ENCODE measurements at regions of chr22 and their contacts with region 1.

Region 1: DNA sequence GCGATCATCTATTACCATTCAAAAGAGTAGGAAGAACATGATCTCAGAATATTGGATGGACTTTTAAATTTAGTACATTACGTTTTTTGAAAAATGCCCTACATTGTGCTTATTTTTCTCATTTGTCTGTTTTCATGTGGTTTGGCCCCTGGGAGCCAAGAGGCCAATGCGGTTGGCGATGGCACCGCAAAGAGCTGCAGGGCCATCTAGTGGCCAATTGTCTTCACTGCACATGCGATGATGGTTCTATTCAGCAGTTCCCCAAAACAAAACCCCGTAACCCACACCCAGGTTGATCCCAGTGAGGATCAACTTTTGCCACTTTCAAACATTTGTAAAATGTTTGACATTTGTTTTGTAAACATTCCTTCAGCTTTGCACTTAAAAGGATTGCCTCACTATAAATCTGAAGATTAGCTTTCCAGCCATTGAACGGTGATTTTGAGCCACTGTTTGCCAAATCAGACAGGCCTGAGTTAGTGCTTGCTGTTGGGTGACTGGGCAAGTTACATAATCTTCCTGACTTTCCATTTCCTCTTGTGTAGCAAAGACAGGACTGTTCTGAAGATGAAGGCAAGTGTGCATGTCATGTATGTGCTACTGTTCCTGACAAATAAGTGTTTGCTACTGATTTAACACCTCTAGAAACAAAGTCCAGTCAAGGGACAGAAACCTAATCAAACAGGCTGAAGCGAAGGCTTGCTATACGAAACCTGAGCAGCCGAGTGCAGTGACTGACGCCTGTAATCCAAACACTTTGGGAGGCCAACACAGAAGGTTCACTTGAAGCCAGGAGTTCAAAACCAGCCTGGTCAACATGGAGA is 29.2 kb upstream of the XBP1 start:
- DNase-seq: peak; percentile 84
- H3K4me3 Mint-ChIP-seq: no peak overlapping the region
- H3K27ac Mint-ChIP-seq: no peak overlapping the region
- H3K4me1 Mint-ChIP-seq: peaks cover 17% of the 10 kb centered on the region
- H3K27me3 Mint-ChIP-seq: no peaks in the 10 kb centered on the region

Region 2: DNA sequence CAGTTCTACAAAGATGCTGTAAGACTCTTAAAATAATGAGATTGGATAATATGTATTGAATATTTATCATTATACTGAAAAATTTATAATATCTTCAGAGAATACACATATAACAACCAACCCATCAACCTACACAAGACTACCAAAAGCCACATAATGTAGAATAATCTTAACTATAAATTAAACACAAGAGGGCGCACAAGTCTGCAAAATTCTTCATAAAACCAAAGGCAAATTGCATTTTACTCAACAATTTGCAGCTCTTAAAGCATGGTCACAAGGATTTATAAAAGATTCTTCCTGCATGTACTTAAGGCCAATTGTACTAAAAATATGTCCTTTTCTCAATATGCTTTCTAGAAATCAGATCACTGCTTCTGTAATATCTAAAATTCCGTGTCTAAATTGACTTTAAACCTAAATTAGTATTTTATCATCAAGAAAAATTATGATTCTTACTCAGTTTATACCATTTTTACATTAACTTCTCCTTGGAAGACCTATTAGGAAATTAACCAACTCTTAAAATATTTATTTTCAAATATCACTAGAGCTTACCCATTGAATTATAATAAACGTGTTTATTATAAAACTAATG is 228.9 kb before region 1 on chr22:
- CTCF ChIA-PET with region 1: interaction called, 120 read pairs
- POLR2A ChIA-PET with region 1: no interaction called
- intact Hi-C with region 1: loop called (anchors 1 kb)
- DNase-seq: no peak
- H3K4me3 Mint-ChIP-seq: no peak overlapping the region
- H3K27ac Mint-ChIP-seq: no peak overlapping the region
- H3K4me1 Mint-ChIP-seq: no peaks in the 10 kb centered on the region
- H3K27me3 Mint-ChIP-seq: peaks cover 10% of the 10 kb centered on the region

Region 3: GRCh38 chr22:28772633-28773460 is 56.7 kb before region 1 on chr22 and contains the start of gene CCDC117:
- CTCF ChIA-PET with region 1: interaction called, 6 read pairs
- POLR2A ChIA-PET with region 1: no interaction called
- intact Hi-C with region 1: loop called (anchors 1 kb)
- DNase-seq: peak; percentile 96
- H3K4me3 Mint-ChIP-seq: peak within 1 kb of the TSS; percentile 98
- H3K27ac Mint-ChIP-seq: peak within 1 kb of the TSS; percentile 97
- H3K4me1 Mint-ChIP-seq: peaks cover 24% of the 10 kb centered on the region
- H3K27me3 Mint-ChIP-seq: no peaks in the 10 kb centered on the region
- total RNA-seq, gene CCDC117: 27.7 to 31.6 TPM

Region 4: DNA sequence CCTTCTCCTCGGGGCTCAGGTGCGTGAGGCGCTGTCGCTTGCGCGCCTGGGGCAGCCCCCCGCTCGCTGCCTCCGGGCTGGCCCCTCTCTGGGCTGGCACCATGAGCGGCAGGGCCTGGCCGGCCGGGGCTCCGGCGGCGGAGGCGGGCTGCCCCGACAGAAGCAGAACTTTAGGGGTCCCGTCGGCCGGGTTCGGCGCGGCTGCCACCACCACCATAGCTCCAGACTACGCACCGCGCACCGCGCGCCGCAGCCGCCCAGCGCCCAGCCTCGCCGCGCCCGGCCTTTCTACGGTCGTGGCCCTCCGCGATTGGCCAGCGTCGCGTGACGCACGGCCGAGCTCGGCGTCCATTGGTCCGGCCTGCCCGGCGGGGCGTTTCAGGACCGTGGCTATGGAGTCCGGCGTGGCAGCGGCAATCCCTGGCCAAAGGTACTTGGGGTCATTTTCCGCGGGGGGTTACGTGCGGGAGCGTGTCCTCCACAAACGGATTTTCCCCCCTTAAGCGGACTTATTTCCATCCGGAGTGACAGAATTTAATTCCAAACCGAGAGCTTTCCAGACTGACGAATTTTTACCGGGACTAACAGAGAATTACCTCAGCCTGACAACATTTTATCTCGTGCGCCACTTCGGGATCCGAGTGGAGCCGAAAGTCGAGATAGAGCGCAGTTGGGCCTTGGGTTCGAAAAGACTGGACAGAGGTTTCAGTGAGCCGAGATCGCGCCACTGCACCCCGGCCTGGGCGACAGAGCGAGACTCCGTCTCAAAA is 29.1 kb before region 1 on chr22 and contains the start of gene XBP1:
- CTCF ChIA-PET with region 1: interaction called, 30 read pairs
- POLR2A ChIA-PET with region 1: interaction called, 8 read pairs
- intact Hi-C with region 1: no loop called
- DNase-seq: peak; percentile 92
- H3K4me3 Mint-ChIP-seq: peak within 1 kb of the TSS; percentile 94
- H3K27ac Mint-ChIP-seq: peak within 1 kb of the TSS; percentile 96
- H3K4me1 Mint-ChIP-seq: peaks cover 46% of the 10 kb centered on the region
- H3K27me3 Mint-ChIP-seq: no peaks in the 10 kb centered on the region
- total RNA-seq, gene XBP1: 128 to 132 TPM

Region 5: DNA sequence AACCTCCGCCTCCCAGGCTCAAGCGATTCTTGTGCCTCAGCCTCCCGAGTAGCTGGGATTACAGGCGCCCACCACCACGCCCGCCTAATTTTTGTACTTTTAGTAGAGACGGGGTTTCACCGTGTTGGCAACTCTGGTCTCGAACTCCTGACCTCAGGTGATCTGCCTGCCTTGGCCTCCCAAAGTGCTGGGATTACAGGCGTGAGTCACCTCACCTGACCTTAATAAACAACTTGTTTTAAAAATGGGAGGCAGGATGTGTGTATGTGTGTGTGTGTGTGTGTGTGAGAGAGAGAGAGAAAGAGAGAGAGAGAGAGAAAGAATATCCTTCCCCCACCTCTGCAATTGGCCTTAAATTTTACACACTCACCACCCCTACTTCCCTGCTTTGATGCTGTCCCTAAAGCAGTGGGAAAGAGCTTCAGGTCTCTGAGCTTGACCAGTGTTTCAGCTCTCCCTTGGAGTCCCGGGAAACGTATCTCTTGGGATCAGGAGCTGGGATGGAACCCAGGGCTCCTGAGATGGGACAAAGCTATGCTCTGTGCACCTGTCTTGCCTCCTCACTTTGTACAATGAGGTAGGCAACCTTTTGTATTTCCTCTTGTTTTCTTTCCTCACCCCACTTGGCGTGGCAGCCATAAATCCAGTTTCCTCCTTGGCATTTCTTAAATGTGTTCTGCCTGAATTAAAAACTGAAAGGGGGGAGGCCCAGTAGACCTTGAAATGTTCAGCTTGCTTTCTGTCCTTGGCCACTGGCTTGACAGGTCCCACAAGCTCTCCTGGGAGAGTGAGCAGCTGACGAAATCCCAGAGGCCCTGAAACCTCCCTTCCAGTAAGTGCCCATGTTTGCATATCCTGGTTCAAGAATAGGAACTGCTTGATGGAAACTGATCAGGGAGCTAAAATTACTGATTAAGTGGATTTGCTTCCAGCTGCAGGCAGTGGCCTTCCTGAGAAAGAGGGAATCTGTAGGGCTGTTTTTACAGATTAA is 11.4 kb before region 1 on chr22:
- CTCF ChIA-PET with region 1: interaction called, 21 read pairs
- POLR2A ChIA-PET with region 1: no interaction called
- intact Hi-C with region 1: no loop called
- DNase-seq: no peak
- H3K4me3 Mint-ChIP-seq: no peak overlapping the region
- H3K27ac Mint-ChIP-seq: peak overlapping the region; percentile 51
- H3K4me1 Mint-ChIP-seq: peaks cover 65% of the 10 kb centered on the region
- H3K27me3 Mint-ChIP-seq: no peaks in the 10 kb centered on the region